Left cardiac atrium (tissue), 4 donors: ENCODE measurements at regions of chr11 and their contacts with region 1.

Region 1: GRCh38 chr11:6377902-6378639 is 12.2 kb upstream of the SMPD1 start:
- DNase-seq: no peak
- ATAC-seq: peak in 1 of 2 donors; percentile 38

Region 2: GRCh38 chr11:6067502-6067901 is 310.6 kb before region 1 on chr11:
- intact Hi-C with region 1: no loop called
- DNase-seq: no peak
- ATAC-seq: no peak

Region 3: DNA sequence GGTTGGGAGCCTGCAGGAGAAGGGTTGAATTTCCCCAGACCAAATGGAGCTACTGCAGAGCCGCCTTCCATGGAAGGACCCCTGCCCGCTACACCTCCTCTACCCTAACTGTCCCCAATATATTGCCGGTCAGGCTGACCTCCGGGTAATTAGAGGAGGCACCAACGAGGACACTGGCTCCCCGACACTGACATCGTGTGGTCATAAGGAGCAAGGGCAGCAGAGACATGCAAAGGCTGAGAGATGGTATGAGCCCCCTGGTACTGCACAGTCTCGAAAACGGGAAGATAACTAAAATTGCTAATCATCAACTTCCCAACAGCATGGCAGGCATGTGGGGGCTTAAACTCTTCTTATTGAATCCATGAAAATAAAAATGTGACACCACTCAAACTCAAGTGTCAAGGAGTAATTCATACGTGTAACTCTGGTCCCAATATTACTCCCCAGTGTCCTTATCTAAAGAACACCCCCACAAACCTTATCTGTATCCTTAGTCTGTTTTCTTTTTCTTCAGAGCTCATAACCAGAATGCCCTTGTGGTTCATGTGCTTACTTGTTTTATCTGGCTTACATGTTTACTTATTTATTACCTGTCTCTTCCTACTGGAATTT is 62.2 kb before region 1 on chr11:
- intact Hi-C with region 1: no loop called
- DNase-seq: peak; percentile 66
- ATAC-seq: peak in 1 of 2 donors; percentile 4

Region 4: DNA sequence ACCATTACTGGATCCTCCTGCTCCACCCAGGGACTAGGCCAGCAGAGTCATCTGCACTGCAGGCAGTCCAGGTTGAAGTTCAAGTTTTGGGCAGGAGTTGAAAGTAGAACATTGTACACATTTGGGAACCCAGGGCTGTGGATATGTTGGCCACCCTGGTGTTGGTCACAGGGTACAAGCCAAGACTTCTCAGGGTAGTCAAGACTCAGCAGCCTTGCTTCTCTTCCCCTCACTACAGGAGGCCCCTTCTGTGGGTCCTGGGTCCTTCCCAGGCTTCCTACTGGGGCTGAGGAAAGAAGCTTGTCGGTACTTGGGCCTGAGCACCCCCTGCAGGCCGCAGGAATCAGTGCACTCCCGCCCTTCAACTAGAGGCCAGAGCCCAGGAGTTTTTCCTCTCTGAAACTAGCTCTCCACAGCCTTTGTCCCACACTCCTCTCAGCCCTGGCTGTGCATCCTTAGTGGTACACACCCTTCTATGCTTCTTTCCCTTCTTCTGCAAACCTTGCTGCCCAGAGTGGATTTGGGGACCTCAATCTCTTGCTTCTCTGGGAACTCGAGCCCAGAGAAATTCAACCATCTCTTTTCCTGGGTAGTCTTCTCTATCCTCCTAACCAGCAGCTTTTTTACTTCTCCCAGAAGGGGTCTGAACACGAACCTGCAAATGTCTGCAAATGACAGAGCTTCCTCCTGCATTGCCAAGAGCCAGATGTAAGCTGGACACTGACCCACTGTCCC is 65.4 kb after region 1 on chr11:
- intact Hi-C with region 1: loop called (anchors 2 to 5 kb)
- DNase-seq: peak; percentile 65
- ATAC-seq: peak; percentile 65 to 77

Region 5: GRCh38 chr11:6705905-6706535 is 327.9 kb after region 1 on chr11:
- intact Hi-C with region 1: loop called in 1 of 2 experiments (anchors 10 kb)
- DNase-seq: peak; percentile 45
- ATAC-seq: peak; percentile 29 to 58